Body of pancreas (tissue), 4 donors: ENCODE measurements at regions of chr7 and their contacts with region 1.

Region 1: GRCh38 chr7:107799647-107800264 is 3.3 kb downstream of the SLC26A3 start:
- DNase-seq: peak in 3 of 4 donors; percentile 12 to 38 (median 14)
- ATAC-seq: peak; percentile 83
- H3K4me3 ChIP-seq: no peak overlapping the region
- H3K27ac ChIP-seq: peak overlapping the region in 3 of 4 donors; percentile 13 to 62 (median 45)
- H3K4me1 ChIP-seq: peaks cover 14% of the 10 kb centered on the region
- H3K27me3 ChIP-seq: no peaks in the 10 kb centered on the region
- CTCF ChIP-seq: no peak
- POLR2A ChIP-seq: no peak

Region 2: DNA sequence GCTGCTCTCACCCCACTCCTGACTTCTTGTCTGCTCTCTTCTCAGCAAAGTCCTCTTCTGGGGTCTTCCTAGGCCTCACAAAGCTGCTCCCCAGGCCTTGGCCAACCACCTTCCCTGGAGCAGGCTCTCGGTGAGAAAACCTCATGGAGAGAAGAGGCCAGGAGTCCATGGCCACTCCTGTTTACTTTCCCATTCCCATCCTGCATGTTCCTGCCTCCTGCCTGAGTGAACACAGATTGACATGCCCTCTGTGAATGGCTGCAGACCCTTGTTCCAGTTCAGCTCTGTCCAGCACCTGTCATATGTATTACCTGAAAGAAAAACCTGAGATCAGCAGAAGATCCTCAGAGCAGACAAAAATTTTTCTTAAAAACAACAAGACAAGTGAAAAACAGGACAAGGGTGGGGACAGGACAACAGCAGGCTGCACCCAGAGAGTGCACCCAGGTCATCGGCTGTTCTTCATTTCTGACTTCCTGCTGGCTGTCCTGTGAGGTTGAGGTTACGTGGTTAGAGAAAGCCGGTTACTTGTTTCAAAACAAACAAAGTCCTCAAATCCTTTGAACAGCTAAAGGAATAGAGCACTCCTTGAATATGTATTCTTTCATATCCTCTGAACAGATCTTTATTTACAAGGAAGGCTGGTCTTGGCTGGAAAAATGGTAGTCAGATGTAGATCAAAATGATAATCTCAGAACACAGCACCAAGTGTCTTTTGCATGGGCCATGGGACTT is 57.2 kb after region 1 on chr7:
- intact Hi-C with region 1: loop called (anchors 10 kb)
- DNase-seq: peak in 1 of 4 donors; percentile 8
- ATAC-seq: no peak
- H3K4me3 ChIP-seq: no peak overlapping the region
- H3K27ac ChIP-seq: peak overlapping the region in 3 of 4 donors; percentile 7 to 55 (median 12)
- H3K4me1 ChIP-seq: peaks cover 47% of the 10 kb centered on the region
- H3K27me3 ChIP-seq: no peaks in the 10 kb centered on the region
- CTCF ChIP-seq: no peak
- POLR2A ChIP-seq: no peak